ENCODE measurements at regions of chr20 and their contacts with region 1.

Region 1: DNA sequence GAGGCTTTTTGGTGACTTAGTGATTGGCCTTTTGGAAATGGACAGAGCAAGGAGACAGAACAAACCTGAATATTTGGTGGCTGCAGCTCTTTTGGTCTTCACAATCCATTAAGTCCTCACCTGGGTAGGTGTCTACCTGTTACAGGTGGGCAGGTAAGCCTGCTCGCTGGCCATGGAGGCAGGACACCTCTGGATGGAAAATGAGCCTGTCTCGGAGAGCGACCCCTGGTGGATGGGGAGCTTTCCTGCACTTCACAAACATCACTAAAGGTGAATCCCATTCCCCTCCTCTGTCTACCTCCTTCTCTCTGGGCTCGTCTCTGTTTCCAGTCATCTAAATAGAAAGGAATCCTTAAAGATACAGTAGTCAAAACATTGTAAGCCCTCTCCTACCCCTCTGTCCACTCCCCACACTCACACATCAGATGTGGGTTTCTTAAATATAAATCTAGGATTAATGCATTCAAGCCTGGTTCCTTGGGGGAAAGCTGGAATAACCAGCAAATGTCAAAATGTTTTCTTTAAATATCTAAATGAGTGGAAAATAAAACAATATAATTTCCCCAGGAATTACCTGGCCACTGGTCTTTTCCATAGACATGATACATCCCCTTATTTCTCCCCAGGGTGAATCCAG is 304.9 kb downstream of the CDH26 start:
- DNase-seq: peak; percentile 55
- ATAC-seq: no peak
- H3K4me3 Mint-ChIP-seq: no peak overlapping the region
- H3K27ac Mint-ChIP-seq: no peak overlapping the region
- H3K4me1 Mint-ChIP-seq: peaks cover 4% of the 10 kb centered on the region
- H3K27me3 Mint-ChIP-seq: no peaks in the 10 kb centered on the region

Region 2: DNA sequence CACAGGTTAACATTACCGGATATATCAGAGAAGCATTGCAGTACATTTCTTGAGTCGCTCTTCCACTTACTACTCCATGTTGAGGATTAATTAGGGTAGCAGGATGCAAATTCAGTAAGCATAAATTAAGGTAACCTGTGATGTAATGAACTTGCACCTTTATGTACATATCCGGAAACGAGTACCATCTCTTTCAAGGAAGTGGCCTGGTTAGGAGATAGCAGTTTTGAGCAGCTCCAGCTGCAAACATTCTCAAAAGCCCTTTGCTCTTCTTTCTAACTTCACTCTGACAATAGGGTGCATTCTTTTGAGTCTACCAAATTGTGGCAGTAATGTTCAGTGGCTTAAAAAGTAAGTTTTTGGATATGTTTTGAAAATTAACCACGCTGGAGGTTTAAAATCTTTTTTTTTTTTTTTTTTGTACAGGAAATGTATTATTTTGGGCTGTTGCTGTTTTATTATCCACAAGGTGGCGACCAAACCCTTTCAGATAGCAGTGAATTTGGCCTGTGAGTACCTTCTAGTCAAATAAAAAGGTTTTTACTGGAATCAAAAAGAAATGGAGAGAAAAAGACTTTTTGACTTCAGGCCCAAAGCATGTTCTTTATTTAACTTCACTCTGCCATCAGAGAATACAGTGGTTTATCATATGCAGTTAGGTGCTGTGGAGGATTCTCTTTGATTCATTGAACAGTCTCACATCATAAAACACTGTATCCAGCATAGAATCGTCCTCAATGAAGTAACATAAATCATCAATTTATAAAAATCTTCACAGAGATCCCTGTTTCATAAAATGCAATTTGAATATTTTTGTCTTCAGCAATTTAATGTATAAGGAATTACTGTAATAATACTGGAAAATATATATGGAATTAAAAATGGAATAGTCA is 314.0 kb before region 1 on chr20:
- CTCF ChIA-PET with region 1: interaction called, 20 read pairs
- DNase-seq: peak; percentile 59
- ATAC-seq: peak; percentile 85
- H3K4me3 Mint-ChIP-seq: peak overlapping the region; percentile 54
- H3K27ac Mint-ChIP-seq: peak overlapping the region; percentile 92
- H3K4me1 Mint-ChIP-seq: peaks cover 21% of the 10 kb centered on the region
- H3K27me3 Mint-ChIP-seq: no peaks in the 10 kb centered on the region

Region 3: GRCh38 chr20:60057123-60057801 is 205.8 kb before region 1 on chr20:
- CTCF ChIA-PET with region 1: interaction called, 35 read pairs
- DNase-seq: peak; percentile 77
- ATAC-seq: peak; percentile 61
- H3K4me3 Mint-ChIP-seq: peak overlapping the region; percentile 69
- H3K27ac Mint-ChIP-seq: peak overlapping the region; percentile 82
- H3K4me1 Mint-ChIP-seq: peaks cover 38% of the 10 kb centered on the region
- H3K27me3 Mint-ChIP-seq: peaks cover 10% of the 10 kb centered on the region

Region 4: DNA sequence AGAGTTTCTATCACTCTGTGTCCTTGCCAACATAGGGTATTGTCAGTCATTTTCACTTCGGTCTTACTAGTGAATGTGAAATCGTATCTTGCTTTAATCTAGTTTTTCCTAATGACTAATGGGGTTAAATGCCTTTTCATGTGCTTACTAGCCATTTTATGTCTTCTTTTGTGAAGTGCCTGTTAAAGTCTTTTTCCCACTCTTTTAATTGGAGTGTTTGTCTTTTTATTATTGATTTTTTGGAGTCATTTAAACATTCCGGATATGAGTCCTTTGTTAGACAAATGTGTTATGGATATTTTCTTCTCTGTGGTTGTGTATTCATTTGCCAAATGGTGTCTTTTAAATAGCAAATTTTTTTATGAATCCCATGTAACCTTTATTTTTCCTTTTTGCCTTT is 110.3 kb before region 1 on chr20:
- CTCF ChIA-PET with region 1: no interaction called
- DNase-seq: no peak
- ATAC-seq: no peak
- H3K4me3 Mint-ChIP-seq: no peak overlapping the region
- H3K27ac Mint-ChIP-seq: no peak overlapping the region
- H3K4me1 Mint-ChIP-seq: no peaks in the 10 kb centered on the region
- H3K27me3 Mint-ChIP-seq: peaks cover 5% of the 10 kb centered on the region

Measured in activated CD8-positive, alpha-beta memory T cell treated with anti-CD3 and anti-CD28 coated beads, Interleukin-2, amount 10 ng/mL, durations not matched to agents 7 days and 5 days (primary cell).